ENCODE measurements at regions of chr5 and their contacts with region 1.

Region 1: GRCh38 chr5:175464074-175464941 is 14.1 kb upstream of the SFXN1 start:
- DNase-seq: peak; percentile 62
- H3K4me3 ChIP-seq: no peak overlapping the region; a peak in 2 of 4 replicates
- H3K27ac ChIP-seq: no peak overlapping the region
- H3K4me1 ChIP-seq: no peaks in the 10 kb centered on the region; a peak in 1 of 4 replicates
- H3K27me3 ChIP-seq: no peaks in the 10 kb centered on the region
- CTCF ChIP-seq: peak; percentile 68
- EP300 ChIP-seq: no peak
- RAD21 ChIP-seq: peak; percentile 51; the same call in 1 of the 2 replicates

Region 2: DNA sequence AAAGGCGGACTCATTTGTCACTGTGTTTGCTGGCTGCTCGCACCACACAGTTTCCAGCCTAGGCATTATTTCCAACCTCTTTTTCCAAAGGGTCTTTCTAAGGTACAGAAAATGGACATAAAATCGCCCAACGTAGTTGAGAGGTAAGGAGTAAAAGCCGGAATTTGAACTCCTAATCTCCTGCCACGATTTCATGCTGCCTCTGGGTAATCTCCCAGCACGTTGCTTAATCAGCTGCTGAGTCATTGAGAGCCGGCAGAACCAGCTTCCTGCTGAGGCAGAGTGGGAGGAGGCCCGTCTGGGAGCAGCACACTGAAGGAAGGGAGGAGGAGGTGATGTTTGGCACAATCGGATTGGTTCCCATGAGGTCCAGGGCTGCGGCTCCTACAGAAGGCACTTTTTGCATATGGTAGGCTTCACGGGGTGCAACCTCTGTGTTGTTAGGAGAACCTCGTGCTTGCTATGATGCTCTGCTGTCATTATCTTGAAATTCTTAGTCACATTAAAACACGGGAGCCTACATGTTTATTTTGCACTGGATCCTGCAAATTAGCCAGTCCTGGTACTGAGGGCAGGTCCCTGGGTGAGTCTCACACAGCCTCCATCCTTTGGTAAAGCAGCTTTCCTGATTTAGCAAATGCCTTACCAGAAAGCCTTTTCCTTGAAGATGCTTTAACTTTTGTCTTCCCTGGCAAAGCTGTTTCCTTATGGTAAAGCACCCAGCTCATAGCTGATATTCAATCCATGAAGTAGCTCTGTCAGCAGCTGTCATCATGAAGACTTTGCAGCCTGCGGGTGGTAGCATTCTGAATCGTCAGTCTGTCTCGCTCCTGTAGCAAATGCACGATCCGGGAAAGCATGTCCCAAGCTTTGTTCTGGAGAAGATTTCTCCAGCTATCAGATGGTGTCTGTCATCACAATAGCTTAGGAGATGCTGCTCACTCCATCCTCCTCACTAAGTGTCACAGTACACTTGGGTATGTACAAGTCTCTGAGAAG is 931.6 kb before region 1 on chr5:
- CTCF ChIA-PET with region 1: no interaction called
- POLR2A ChIA-PET with region 1: no interaction called
- DNase-seq: peak; percentile 48
- H3K4me3 ChIP-seq: peak overlapping the region in 1 of 2 experiments; percentile 9; a peak in 1 of 4 replicates
- H3K27ac ChIP-seq: peak overlapping the region in 1 of 2 experiments; percentile 78; a peak in 3 of 4 replicates
- H3K4me1 ChIP-seq: peaks cover 17 to 22% of the 10 kb centered on the region in 2 experiments
- H3K27me3 ChIP-seq: no peaks in the 10 kb centered on the region
- CTCF ChIP-seq: no peak
- EP300 ChIP-seq: peak in 1 of 2 experiments; percentile 69; a peak in 2 of 4 replicates
- RAD21 ChIP-seq: no peak

Region 3: GRCh38 chr5:174951146-174951780 is 513.0 kb before region 1 on chr5:
- CTCF ChIA-PET with region 1: interaction called, 15 read pairs
- POLR2A ChIA-PET with region 1: no interaction called
- DNase-seq: peak; percentile 75
- H3K4me3 ChIP-seq: no peak overlapping the region; a peak in 1 of 4 replicates
- H3K27ac ChIP-seq: no peak overlapping the region
- H3K4me1 ChIP-seq: no peaks in the 10 kb centered on the region
- H3K27me3 ChIP-seq: no peaks in the 10 kb centered on the region
- CTCF ChIP-seq: peak; percentile 87
- EP300 ChIP-seq: no peak
- RAD21 ChIP-seq: peak; percentile 94

Region 4: GRCh38 chr5:175452166-175452565 is 12.1 kb before region 1 on chr5:
- CTCF ChIA-PET with region 1: interaction called, 16 read pairs
- POLR2A ChIA-PET with region 1: no interaction called
- DNase-seq: no peak
- H3K4me3 ChIP-seq: no peak overlapping the region
- H3K27ac ChIP-seq: no peak overlapping the region
- H3K4me1 ChIP-seq: no peaks in the 10 kb centered on the region
- H3K27me3 ChIP-seq: peaks cover 19% of the 10 kb centered on the region; the same call in 1 of the 2 replicates
- CTCF ChIP-seq: no peak
- EP300 ChIP-seq: no peak
- RAD21 ChIP-seq: no peak

Region 5: GRCh38 chr5:175478384-175479124 is 14.2 kb after region 1 on chr5 and contains the start of gene SFXN1:
- CTCF ChIA-PET with region 1: interaction called, 40 read pairs
- POLR2A ChIA-PET with region 1: interaction called, 5 read pairs
- DNase-seq: peak; percentile 99
- H3K4me3 ChIP-seq: peak within 1 kb of the TSS; percentile 71 to 89
- H3K27ac ChIP-seq: peak within 1 kb of the TSS in 1 of 2 experiments; percentile 77; a peak in 2 of 4 replicates
- H3K4me1 ChIP-seq: peaks cover 0 to 14% of the 10 kb centered on the region in 2 experiments; a peak in 2 of 4 replicates
- H3K27me3 ChIP-seq: peaks cover 5% of the 10 kb centered on the region; the same call in 1 of the 2 replicates
- CTCF ChIP-seq: no peak
- EP300 ChIP-seq: no peak
- RAD21 ChIP-seq: no peak
- polyA plus RNA-seq, gene SFXN1: 73.6 and 90.9 TPM in 2 replicates